Dorsolateral prefrontal cortex (tissue), 120 donors: ENCODE measurements at regions of chr1 and their contacts with region 1.

Region 1: GRCh38 chr1:154567386-154568156 is at the start of gene CHRNB2:
- DNase-seq: peak in 9 of 10 donors; percentile 43 to 82 (median 67)
- H3K4me3 ChIP-seq: peak within 1 kb of the TSS; percentile 8 to 73 (median 59)
- H3K27ac ChIP-seq: peak within 1 kb of the TSS in 18 of 59 donors; percentile 2 to 74 (median 28)
- H3K27me3 ChIP-seq: no peaks in the 10 kb centered on the region
- CTCF ChIP-seq: peak in 24 of 56 donors; percentile 7 to 40 (median 20)
- total RNA-seq, gene CHRNB2: 10.0 to 43.4 (median 29.1) TPM

Region 2: GRCh38 chr1:154627257-154628120 is 59.9 kb after region 1 on chr1:
- intact Hi-C with region 1: loop called in 1 of 2 experiments (anchors 5 kb)
- DNase-seq: peak; percentile 77 to 92 (median 86)
- H3K4me3 ChIP-seq: peak overlapping the region; percentile 47 to 99 (median 95)
- H3K27ac ChIP-seq: peak overlapping the region; percentile 42 to 98 (median 91)
- H3K27me3 ChIP-seq: no peaks in the 10 kb centered on the region
- CTCF ChIP-seq: peak in 32 of 56 donors; percentile 3 to 55 (median 28)